CD14-positive monocyte (primary cell): ENCODE measurements at regions of chr4 and their contacts with region 1.

Region 1: GRCh38 chr4:76179398-76180318 is 31.5 kb upstream of the NUP54 start:
- DNase-seq: peak; percentile 72 to 78 (median 77)
- H3K4me3 ChIP-seq: no peak overlapping the region
- H3K4me3 Mint-ChIP-seq: no peak overlapping the region
- H3K27ac ChIP-seq: no peak overlapping the region
- H3K27ac Mint-ChIP-seq: peak overlapping the region in 2 of 7 donors; percentile 35 to 36
- H3K4me1 ChIP-seq: no peaks in the 10 kb centered on the region
- H3K4me1 Mint-ChIP-seq: no peaks in the 10 kb centered on the region
- H3K27me3 ChIP-seq: no peaks in the 10 kb centered on the region
- H3K27me3 Mint-ChIP-seq: no peaks in the 10 kb centered on the region
- CTCF ChIP-seq: peak; percentile 89

Region 2: DNA sequence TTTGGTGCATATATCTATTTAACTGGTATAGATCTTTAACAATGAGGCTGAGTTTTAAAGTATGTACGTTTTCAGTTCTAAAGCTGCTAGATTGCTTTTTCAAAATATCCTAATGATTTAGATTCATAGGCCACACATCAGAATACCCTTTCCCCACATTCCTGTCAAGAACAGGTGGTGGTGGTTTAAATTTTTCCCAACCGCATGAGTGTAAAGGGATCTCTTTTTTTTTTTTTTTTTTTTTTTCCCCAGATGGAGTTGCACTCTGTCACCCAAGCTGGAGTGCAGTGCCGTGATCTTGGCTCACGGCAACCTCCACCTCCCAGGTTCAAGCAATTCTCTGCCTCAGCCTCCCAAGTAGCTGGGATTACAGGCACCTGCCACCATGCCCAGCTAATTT is 59.5 kb before region 1 on chr4:
- intact Hi-C with region 1: no loop called
- DNase-seq: no peak
- H3K4me3 ChIP-seq: no peak overlapping the region
- H3K4me3 Mint-ChIP-seq: no peak overlapping the region
- H3K27ac ChIP-seq: no peak overlapping the region
- H3K27ac Mint-ChIP-seq: no peak overlapping the region
- H3K4me1 ChIP-seq: no peaks in the 10 kb centered on the region
- H3K4me1 Mint-ChIP-seq: no peaks in the 10 kb centered on the region
- H3K27me3 ChIP-seq: no peaks in the 10 kb centered on the region
- H3K27me3 Mint-ChIP-seq: no peaks in the 10 kb centered on the region
- CTCF ChIP-seq: no peak

Region 3: GRCh38 chr4:76377911-76378310 is 198.3 kb after region 1 on chr4:
- intact Hi-C with region 1: loop called (anchors 5 kb)
- DNase-seq: peak; percentile 1 to 26 (median 17)
- H3K4me3 ChIP-seq: no peak overlapping the region
- H3K4me3 Mint-ChIP-seq: no peak overlapping the region
- H3K27ac ChIP-seq: no peak overlapping the region
- H3K27ac Mint-ChIP-seq: no peak overlapping the region
- H3K4me1 ChIP-seq: peaks cover 6% of the 10 kb centered on the region in 2 donors
- H3K4me1 Mint-ChIP-seq: peaks cover 23% of the 10 kb centered on the region
- H3K27me3 ChIP-seq: no peaks in the 10 kb centered on the region
- H3K27me3 Mint-ChIP-seq: peaks cover 0 to 5% (median 0%) of the 10 kb centered on the region in 3 donors
- CTCF ChIP-seq: peak; percentile 71

Region 4: DNA sequence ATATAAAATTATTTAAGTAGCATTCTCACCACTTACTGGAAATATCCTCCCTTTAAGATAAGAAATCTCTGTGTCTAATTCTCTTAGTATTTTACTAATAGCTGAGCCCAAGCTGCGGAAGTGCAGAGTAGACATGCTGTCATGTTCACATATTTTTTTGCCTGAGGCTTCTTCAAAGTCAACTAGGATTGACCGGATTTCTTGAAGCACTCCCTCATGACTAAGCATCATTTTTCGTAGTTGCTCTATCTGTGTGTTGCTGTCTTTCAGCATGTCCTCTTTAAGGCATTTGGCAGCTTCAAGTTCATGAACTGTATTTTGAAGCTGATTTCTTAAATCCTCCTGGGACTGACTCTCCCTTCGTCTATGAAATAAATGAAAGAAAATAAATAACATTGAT is 204.4 kb after region 1 on chr4:
- intact Hi-C with region 1: loop called (anchors 5 kb)
- DNase-seq: no peak
- H3K4me3 ChIP-seq: no peak overlapping the region
- H3K4me3 Mint-ChIP-seq: no peak overlapping the region
- H3K27ac ChIP-seq: no peak overlapping the region
- H3K27ac Mint-ChIP-seq: peak overlapping the region in 2 of 7 donors; percentile 29 to 36
- H3K4me1 ChIP-seq: peaks cover 15 to 16% of the 10 kb centered on the region in 2 donors
- H3K4me1 Mint-ChIP-seq: peaks cover 32% of the 10 kb centered on the region
- H3K27me3 ChIP-seq: no peaks in the 10 kb centered on the region
- H3K27me3 Mint-ChIP-seq: peaks cover 0 to 9% (median 2%) of the 10 kb centered on the region in 3 donors
- CTCF ChIP-seq: no peak

Region 5: DNA sequence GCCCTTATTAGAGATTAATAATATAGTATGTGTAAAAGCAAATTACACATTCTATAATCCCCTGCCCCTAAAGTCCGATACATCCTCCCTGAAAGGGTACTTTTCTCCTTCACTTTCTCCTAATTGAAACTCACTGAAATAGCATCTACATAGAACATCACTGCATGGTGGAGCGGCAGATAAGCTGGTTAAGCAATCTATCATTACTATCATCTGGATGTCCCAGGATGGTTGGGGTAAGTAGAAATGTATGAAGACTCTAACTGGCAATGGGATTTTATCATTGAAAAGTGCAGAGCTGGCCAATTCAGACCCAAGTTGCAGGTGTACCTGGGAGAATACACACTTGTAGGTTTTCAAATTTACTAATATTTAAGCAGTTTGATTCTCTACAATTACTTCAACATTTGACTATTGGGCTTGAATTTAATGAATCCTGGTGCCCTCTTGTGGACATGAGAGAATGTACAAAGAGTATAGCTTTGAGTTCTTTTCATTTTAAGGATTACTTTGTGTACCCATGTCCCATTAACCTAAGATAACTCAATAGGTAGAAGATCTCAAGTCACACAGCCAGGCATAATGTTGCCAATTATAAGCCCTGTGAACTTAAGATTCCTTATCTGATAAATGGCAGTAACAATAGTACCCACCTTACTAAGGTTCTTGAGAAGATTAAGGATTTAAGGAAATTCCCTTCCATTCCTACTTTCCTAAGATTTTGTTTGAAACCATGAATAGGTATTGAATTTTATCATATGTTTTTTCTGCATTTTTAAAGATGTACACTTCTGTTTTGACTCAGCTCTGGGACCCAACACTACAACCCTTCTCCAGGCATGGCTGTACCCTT is 325.2 kb after region 1 on chr4:
- intact Hi-C with region 1: loop called (anchors 10 kb)
- DNase-seq: peak; percentile 6 to 19 (median 16)
- H3K4me3 ChIP-seq: no peak overlapping the region
- H3K4me3 Mint-ChIP-seq: no peak overlapping the region
- H3K27ac ChIP-seq: no peak overlapping the region
- H3K27ac Mint-ChIP-seq: no peak overlapping the region
- H3K4me1 ChIP-seq: no peaks in the 10 kb centered on the region
- H3K4me1 Mint-ChIP-seq: no peaks in the 10 kb centered on the region
- H3K27me3 ChIP-seq: no peaks in the 10 kb centered on the region
- H3K27me3 Mint-ChIP-seq: peaks cover 1 to 2% (median 2%) of the 10 kb centered on the region in 3 donors
- CTCF ChIP-seq: peak; percentile 77